PC-9 (cell line): ENCODE measurements at regions of chr7 and their contacts with region 1.

Region 1: GRCh38 chr7:140810830-140811556 is 113.7 kb downstream of the BRAF start:
- DNase-seq: peak; percentile 58 to 68
- H3K4me3 ChIP-seq: no peak overlapping the region
- H3K27ac ChIP-seq: no peak overlapping the region
- H3K4me1 ChIP-seq: no peaks in the 10 kb centered on the region
- H3K27me3 ChIP-seq: no peaks in the 10 kb centered on the region
- CTCF ChIP-seq: peak; percentile 91

Region 2: DNA sequence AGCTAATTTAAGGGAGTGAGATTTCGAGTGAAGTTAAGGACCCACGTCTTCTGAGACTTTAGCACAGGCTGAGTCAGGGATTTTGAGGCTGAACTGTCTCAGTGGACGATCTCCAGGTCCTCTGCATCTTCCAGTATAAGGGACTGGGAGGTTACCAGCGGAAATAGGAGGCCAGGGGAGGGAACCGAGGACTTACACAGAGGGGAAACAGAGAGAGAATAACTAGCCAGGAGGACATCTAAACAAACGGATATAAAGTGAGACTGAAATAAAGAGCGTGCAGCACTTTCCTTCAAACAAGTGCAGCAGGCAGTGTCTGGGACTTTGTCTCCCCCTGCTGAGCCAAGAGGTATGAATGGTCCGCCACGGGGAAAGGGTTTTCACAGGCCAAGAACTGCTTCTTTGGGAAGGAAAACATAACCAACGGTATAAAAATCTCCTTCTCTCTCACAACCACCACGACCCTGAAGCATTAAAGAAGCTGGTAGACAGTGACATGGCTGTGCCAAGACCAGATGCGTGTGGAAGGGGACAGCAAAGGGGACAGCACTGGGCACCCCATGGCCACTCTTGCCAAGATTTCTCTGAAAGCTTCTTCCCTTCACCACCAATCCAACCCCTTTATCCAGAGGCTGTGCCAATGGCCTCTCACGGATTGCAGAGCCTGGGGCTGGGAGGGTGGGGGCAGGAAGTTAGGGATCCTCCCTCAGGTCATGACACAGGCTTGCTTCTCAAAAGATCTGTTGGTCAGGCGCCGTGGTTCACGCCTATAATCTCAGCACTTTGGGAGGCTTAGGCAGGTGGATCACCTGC is 484.7 kb before region 1 on chr7:
- CTCF ChIA-PET with region 1: no interaction called
- POLR2A ChIA-PET with region 1: no interaction called
- intact Hi-C with region 1: no loop called
- DNase-seq: peak in 1 of 2 experiments; percentile 67
- H3K4me3 ChIP-seq: no peak overlapping the region
- H3K27ac ChIP-seq: no peak overlapping the region
- H3K4me1 ChIP-seq: no peaks in the 10 kb centered on the region
- H3K27me3 ChIP-seq: no peaks in the 10 kb centered on the region
- CTCF ChIP-seq: peak; percentile 78

Region 3: DNA sequence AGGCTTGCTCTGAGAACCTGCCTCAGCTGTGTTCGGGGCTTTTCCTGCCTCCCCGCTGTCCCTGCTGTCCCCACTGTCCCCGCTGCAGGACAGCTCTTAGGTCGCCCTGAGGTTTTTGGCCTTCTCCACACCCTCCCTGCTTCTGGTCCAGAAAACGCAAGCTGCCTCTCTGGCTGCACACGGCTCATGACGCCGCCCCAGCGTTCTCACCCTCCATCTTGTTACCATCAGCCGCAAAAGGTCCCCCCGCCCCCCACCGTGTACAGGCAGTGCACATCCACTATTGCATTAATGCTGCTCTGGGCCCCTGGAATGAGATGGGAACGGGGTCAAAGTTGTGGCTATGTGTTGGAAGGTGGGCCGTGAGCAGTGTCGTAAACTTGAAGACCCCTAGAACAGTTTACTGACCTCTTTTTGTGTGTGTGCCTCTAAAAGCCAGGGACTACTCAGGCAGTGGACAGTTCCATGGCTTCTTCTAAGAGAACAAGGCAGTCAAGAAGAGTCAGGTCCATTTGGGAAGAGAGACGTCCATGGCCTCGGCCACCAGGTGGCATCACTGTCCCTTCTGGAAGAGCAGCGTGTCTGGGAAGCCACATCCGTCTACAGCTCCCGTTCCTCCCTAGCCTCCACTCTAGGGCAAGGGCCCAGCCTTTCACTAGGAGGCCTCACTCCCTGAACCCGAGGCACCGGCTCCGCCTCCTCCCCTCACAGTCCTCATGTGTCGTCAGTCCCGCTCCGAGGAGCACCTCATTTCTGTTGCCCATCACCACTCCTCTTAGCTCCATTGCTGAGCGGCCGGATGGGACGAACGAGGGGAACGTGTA is 293.2 kb before region 1 on chr7:
- CTCF ChIA-PET with region 1: no interaction called
- POLR2A ChIA-PET with region 1: no interaction called
- intact Hi-C with region 1: loop called (anchors 1 kb)
- DNase-seq: peak; percentile 78 to 92
- H3K4me3 ChIP-seq: no peak overlapping the region
- H3K27ac ChIP-seq: no peak overlapping the region
- H3K4me1 ChIP-seq: peaks cover 11% of the 10 kb centered on the region
- H3K27me3 ChIP-seq: no peaks in the 10 kb centered on the region
- CTCF ChIP-seq: peak; percentile 96

Region 4: DNA sequence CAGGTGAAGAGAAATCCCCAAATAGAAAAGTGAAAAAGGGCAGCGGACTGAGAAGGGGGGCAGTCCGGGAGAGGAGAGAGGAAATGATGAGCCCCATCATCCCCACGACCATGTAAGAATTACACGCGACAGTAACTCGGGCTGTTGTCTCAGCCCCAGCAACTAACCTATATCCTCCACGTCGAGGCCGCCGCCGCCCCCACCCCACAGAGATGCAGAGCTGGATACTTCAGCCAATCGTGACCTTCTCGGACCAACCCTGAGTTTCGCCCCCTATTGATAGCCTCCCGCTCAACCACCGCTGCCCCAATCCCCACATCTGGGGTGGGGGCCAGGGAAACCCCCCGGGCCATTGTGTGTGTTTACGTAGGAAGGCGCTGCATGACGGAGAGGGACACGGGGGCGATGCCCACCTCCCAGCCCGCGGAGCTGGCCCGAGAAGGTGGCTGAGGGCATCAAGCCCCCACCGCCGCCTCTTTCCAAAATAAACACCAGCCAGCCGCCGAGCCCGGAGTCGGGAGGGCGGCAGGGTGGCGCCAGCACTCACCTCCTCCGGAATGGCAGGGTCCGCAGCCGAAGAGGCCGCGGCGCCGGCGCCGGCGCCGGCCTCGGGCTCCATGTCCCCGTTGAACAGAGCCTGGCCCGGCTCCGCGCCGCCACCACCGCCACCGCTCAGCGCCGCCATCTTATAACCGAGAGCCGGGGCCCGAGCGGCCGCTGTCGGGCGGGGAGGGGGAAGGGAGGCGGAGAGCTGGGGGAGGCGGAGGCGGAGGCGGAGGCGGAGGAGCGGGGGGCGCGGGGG is 113.2 kb after region 1 on chr7:
- CTCF ChIA-PET with region 1: interaction called, 5 read pairs
- POLR2A ChIA-PET with region 1: no interaction called
- intact Hi-C with region 1: loop called (anchors 2 kb)
- DNase-seq: peak; percentile 51 to 69
- H3K4me3 ChIP-seq: peak overlapping the region; percentile 98
- H3K27ac ChIP-seq: peak overlapping the region; percentile 85
- H3K4me1 ChIP-seq: peaks cover 50% of the 10 kb centered on the region
- H3K27me3 ChIP-seq: no peaks in the 10 kb centered on the region
- CTCF ChIP-seq: peak; percentile 66

Region 5: GRCh38 chr7:141001122-141001521 is 190.1 kb after region 1 on chr7:
- CTCF ChIA-PET with region 1: no interaction called
- POLR2A ChIA-PET with region 1: no interaction called
- intact Hi-C with region 1: loop called (anchors 5 kb)
- DNase-seq: no peak
- H3K4me3 ChIP-seq: no peak overlapping the region
- H3K27ac ChIP-seq: no peak overlapping the region
- H3K4me1 ChIP-seq: no peaks in the 10 kb centered on the region
- H3K27me3 ChIP-seq: no peaks in the 10 kb centered on the region
- CTCF ChIP-seq: no peak

Region 6: DNA sequence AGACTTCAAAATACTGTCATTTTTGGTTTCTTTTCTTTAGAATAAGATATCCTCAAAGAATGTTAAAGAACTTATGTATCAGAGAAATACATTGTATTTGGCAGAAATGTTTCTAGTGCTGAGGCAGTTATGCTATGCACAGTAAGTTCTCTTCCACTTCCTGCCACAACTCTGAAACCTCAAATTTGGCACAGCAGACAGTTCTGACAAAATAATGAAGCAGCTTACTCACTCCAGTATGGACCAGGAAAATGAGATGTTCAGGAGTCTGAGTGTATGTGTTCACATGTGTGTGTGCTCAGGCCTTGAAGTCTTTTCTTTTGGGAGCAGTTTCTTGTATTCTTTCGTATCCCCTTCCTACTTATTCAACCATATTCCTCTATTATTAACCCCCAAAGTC is 543.3 kb after region 1 on chr7:
- CTCF ChIA-PET with region 1: no interaction called
- POLR2A ChIA-PET with region 1: no interaction called
- intact Hi-C with region 1: no loop called
- DNase-seq: no peak
- H3K4me3 ChIP-seq: no peak overlapping the region
- H3K27ac ChIP-seq: no peak overlapping the region
- H3K4me1 ChIP-seq: no peaks in the 10 kb centered on the region
- H3K27me3 ChIP-seq: peaks cover 34% of the 10 kb centered on the region
- CTCF ChIP-seq: no peak

Region 7: GRCh38 chr7:141533149-141533949 is 722.4 kb after region 1 on chr7:
- CTCF ChIA-PET with region 1: no interaction called
- POLR2A ChIA-PET with region 1: no interaction called
- intact Hi-C with region 1: loop called (anchors 1 kb)
- DNase-seq: peak; percentile 41 to 53
- H3K4me3 ChIP-seq: no peak overlapping the region
- H3K27ac ChIP-seq: no peak overlapping the region
- H3K4me1 ChIP-seq: no peaks in the 10 kb centered on the region
- H3K27me3 ChIP-seq: peaks cover 40% of the 10 kb centered on the region
- CTCF ChIP-seq: peak; percentile 96